Aorta (tissue), 5 donors: ENCODE measurements at regions of chr5 and their contacts with region 1.

Region 1: DNA sequence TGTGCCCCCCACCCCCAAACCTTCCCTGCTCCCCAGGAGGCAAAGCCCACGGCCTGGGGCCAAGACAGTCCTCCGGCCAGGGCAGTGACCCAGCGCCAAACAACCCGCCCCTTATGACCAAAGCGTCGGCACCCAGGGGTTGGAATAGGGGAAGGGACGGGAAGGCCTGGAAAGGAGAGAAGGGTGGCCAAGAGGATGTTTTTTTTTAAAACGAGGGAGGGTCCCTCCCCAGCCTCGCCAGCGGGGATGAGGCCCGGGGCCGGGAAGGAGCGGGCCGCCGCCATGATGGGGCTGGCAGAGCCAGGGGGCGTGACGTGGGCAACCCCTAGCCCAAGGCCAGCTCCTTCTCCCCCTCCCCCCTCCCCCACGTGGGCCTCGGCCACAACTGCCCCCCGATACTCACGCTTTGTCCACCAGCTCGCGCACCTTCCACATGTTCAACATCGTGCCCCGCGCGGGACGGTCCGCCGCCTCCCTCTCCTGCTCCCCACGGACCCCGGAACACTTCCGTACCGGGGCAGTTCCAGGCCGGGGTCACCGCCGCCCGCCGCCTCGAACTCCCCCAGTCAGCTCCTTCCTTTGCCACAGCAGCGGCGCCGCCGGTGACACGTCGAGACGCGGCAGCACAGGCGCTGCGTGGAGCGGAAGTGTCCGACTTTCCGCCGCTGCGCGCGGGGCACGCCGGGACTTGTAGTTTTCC is at the start of gene CLINT1:
- DNase-seq: peak; percentile 96 to 99
- ATAC-seq: peak; percentile 98
- H3K4me3 ChIP-seq: peak within 1 kb of the TSS; percentile 48 to 92
- H3K27ac ChIP-seq: peak within 1 kb of the TSS in 1 of 2 donors; percentile 49
- H3K4me1 ChIP-seq: no peaks in the 10 kb centered on the region
- H3K27me3 ChIP-seq: no peaks in the 10 kb centered on the region
- total RNA-seq, gene CLINT1: 57.1 to 60.9 TPM

Region 2: DNA sequence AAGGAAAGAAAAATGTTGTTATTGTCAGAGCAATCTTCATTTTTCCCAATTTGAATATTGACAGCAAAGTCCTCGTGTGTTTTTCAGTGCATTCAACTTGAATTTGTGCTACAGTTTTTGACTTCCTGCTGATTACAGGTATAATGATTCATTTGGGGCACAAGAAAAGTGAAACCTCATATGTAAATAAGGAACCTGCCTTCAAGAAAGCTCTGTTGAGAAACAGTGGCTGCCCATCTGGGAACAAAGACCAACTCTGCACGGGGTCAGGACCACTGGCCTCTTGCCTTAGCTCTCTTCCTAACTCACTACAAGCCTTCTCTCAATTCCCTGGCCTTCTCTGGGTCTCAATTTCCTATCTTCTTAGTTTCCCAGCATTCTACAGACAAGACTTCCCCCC is 916.6 kb before region 1 on chr5:
- intact Hi-C with region 1: no loop called
- DNase-seq: no peak
- ATAC-seq: no peak
- H3K4me3 ChIP-seq: no peak overlapping the region
- H3K27ac ChIP-seq: no peak overlapping the region
- H3K4me1 ChIP-seq: no peaks in the 10 kb centered on the region
- H3K27me3 ChIP-seq: no peaks in the 10 kb centered on the region

Region 3: GRCh38 chr5:157948738-157949410 is 90.2 kb after region 1 on chr5:
- intact Hi-C with region 1: loop called in 1 of 2 experiments (anchors 10 kb)
- DNase-seq: peak; percentile 91 to 92
- ATAC-seq: peak; percentile 96
- H3K4me3 ChIP-seq: no peak overlapping the region
- H3K27ac ChIP-seq: peak overlapping the region in 1 of 2 donors; percentile 27
- H3K4me1 ChIP-seq: peaks cover 0 to 3% of the 10 kb centered on the region in 2 donors
- H3K27me3 ChIP-seq: no peaks in the 10 kb centered on the region

Region 4: GRCh38 chr5:157994906-157995519 is 136.3 kb after region 1 on chr5:
- intact Hi-C with region 1: loop called (anchors 5 to 10 kb)
- DNase-seq: peak; percentile 72 to 83
- ATAC-seq: peak; percentile 93
- H3K4me3 ChIP-seq: no peak overlapping the region
- H3K27ac ChIP-seq: no peak overlapping the region
- H3K4me1 ChIP-seq: no peaks in the 10 kb centered on the region
- H3K27me3 ChIP-seq: no peaks in the 10 kb centered on the region